ENCODE measurements at regions of chr5 and their contacts with region 1.

Region 1: DNA sequence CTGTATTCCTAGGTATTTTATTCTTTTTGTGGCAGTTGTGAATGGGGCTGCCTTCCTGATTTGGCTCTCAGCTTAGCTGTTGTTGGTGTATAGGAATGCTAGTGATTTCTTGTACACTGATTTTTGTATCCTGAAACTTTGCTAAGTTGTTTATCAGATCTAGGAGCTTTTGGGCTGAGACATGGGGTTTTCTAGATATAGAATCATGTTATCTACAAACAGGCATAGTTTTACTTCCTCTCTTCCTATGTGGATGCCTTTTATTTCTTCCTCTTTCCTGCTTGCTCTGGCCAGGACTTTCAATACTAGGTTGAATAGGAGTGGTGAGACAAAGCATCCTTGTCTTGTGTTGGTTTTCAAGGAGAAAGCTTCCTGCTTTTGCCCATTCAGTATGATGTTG is 129.9 kb downstream of the DMXL1 start:
- DNase-seq: no peak
- ATAC-seq: no peak
- H3K4me3 ChIP-seq: no peak overlapping the region
- H3K27ac ChIP-seq: no peak overlapping the region
- H3K4me1 ChIP-seq: no peaks in the 10 kb centered on the region
- H3K27me3 ChIP-seq: no peaks in the 10 kb centered on the region
- CTCF ChIP-seq: no peak
- EP300 ChIP-seq: no peak
- POLR2A ChIP-seq: no peak
- RAD21 ChIP-seq: no peak

Region 2: DNA sequence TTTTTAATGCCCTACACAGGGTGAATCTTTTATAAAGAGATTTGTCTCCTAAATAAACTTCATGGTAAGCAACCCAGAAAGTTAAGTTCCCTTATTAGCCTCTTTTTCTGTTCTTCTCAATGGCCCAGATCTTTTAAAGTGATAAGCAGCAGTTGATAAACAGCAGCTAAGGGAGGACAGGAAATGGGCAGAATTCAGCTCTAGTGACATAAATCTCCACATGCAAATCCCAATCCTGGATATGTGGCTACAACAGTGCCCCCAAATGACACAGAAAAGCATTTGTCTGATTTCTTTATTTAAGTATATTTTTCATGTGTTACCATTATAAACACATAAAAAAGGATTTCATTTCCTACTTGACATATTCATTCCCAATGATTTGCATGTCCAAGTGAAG is 411.4 kb before region 1 on chr5:
- CTCF ChIA-PET with region 1: no interaction called
- POLR2A ChIA-PET with region 1: no interaction called
- RAD21 ChIA-PET with region 1: no interaction called
- SMC1A ChIA-PET with region 1: no interaction called
- in situ Hi-C with region 1: no loop called
- intact Hi-C with region 1: no loop called
- DNase-seq: no peak
- ATAC-seq: no peak
- H3K4me3 ChIP-seq: no peak overlapping the region
- H3K27ac ChIP-seq: no peak overlapping the region
- H3K4me1 ChIP-seq: no peaks in the 10 kb centered on the region
- H3K27me3 ChIP-seq: no peaks in the 10 kb centered on the region
- CTCF ChIP-seq: 0 out of 6 replicates have a peak, but pooled peaks of 1 of the 3 experiments have one; percentile 4
- EP300 ChIP-seq: no peak
- POLR2A ChIP-seq: no peak
- RAD21 ChIP-seq: no peak

Region 3: DNA sequence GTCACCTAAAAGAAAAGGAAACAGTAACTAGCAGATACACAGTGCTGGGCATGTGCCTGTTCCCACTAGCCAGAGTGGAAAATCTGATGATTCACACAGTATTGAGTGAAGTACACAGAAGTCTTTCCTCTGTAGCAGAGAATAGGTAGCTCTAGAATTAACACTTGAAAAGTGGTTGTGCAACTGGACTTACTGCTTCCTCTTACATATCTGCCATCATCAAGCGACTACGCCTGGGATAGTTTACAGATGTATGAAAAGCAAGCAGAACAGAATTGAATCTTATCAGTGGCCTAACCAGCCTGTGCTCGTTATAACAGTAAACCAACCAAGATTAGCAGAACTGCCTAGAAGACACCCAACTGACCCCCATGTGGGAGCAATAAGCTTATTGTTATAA is 343.1 kb before region 1 on chr5:
- CTCF ChIA-PET with region 1: no interaction called
- POLR2A ChIA-PET with region 1: no interaction called
- RAD21 ChIA-PET with region 1: no interaction called
- SMC1A ChIA-PET with region 1: no interaction called
- in situ Hi-C with region 1: no loop called
- intact Hi-C with region 1: no loop called
- DNase-seq: no peak
- ATAC-seq: peak; percentile 32
- H3K4me3 ChIP-seq: no peak overlapping the region
- H3K27ac ChIP-seq: no peak overlapping the region
- H3K4me1 ChIP-seq: no peaks in the 10 kb centered on the region
- H3K27me3 ChIP-seq: no peaks in the 10 kb centered on the region
- CTCF ChIP-seq: no peak
- EP300 ChIP-seq: no peak
- POLR2A ChIP-seq: no peak
- RAD21 ChIP-seq: no peak

Region 4: DNA sequence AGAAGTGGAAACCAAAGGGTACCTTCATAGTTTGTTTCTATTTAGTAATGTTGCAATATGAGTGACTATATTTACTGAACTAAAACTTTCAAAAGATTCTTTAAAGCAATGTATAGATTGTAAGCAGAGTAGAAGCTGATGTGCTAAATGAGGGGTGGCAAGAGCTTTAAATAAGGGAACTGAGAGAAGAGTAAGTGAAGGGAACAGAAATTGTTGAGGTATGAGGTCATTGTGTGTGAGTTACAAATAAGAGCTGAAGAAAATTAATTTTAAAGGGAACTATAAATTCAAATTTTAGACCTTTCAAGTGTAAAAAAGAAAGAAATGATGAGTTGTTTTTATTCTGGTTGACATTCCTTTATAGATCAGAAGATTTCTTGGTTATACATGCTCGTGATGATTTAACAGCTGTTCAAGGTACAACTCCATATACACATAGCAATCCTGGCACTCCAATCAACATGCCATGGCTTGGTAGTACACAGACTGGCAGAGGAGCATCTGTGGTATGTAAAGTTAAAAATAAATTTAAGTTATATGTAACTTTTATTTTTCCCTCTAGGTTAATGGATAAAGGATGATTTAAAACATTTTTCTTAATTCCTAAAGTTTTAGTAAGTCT is 19.9 kb after region 1 on chr5:
- CTCF ChIA-PET with region 1: interaction called, 3 read pairs
- POLR2A ChIA-PET with region 1: no interaction called
- RAD21 ChIA-PET with region 1: no interaction called
- SMC1A ChIA-PET with region 1: interaction called, 10 read pairs
- in situ Hi-C with region 1: no loop called
- intact Hi-C with region 1: no loop called
- DNase-seq: no peak
- ATAC-seq: peak; percentile 97
- H3K4me3 ChIP-seq: no peak overlapping the region
- H3K27ac ChIP-seq: no peak overlapping the region
- H3K4me1 ChIP-seq: peaks cover 6% of the 10 kb centered on the region; the same call in 1 of the 2 replicates
- H3K27me3 ChIP-seq: no peaks in the 10 kb centered on the region
- CTCF ChIP-seq: no peak
- EP300 ChIP-seq: no peak
- POLR2A ChIP-seq: no peak
- RAD21 ChIP-seq: no peak